Posterior cingulate gyrus (tissue), 11 donors: ENCODE measurements at regions of chr2 and their contacts with region 1.

Region 1: DNA sequence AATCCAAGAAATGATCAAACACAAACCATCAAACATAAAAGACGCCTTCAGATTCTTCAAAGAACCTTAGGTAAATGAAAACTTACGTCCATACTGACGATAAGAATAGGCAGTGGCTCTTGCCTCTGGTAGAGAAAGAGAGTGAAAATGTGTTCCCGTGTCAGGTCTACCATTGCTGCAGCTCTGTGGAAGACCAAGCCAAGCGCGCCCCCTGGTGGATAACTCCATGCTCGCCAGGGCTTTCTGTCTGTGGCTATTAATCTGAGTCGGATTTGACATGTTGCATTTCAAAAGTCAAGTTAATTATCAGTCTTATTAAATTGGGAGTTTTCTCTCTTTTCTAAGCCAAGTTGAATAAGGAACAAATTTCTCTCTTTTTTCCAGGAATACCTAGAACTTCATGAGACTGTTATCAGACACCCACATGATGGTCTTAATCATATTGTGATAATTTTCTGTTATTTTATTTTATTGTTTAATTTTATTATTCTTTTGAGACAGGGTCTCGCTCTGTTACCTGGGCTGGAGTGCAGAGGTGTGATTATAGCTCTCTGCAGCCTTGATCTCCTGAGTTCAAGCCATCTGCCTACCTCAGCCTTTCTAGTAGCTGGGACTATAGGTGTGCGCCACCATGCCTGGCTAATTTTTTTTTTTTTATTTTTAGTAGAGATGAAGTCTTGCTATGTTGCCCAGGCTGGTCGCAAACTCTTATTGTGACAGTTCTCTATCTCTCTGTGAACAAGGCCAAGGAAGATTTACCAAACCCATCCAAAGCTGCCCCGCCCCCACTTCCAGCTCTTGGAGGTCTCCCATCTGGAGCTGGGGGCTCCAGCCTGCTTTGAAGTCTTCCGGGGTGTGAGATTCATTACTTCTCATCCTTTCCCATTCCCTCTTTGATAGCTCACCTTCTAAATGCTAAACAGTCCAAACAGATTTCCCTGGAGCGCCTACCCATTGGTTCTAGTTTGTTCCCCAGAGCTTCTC is 15.8 kb upstream of the ZAP70 start:
- DNase-seq: peak; percentile 83 to 99 (median 94)

Region 2: DNA sequence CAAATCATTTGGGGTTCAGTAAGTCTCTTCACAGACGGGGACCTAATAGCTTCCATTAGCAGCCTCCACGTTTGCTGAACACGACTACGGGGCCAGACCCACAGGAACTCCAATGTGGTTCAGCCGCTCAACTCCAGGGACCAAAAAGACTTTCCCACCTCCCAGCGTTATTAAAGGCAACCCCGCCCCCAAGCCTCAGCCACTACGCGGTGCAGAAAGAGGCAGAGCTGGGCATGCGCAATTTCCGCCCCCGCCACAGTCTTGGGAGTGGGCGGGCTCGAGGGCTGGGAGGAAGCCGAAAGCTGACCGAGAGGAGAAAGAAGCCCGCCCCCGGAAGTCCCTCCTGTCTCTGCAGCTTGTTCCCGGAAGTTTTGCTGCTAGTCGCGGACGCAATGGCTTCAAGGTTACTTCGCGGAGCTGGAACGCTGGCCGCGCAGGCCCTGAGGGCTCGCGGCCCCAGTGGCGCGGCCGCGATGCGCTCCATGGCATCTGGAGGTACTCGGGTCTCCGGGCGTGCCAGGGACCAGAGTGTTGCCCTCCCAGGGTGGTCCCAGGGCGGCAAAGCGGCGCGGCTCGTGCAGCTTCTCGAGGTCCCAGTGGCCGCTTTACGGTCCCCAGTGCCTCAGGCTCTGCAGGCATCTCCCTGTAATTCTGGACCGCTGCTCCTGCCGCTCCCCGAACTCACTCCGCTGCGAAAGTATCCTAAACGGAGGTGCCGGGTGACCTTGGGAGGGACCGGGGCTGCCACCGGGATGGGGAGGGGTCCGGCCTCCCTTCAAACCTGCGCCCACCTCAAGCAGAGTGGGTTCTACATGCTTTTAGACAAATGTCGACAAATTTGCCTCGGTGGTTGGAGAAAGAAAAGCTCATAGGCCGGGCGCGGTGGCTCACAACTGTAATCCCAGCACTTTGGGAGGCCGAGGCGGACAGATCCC is 51.6 kb before region 1 on chr2 and contains the start of gene COX5B:
- intact Hi-C with region 1: loop called (anchors 10 kb)
- DNase-seq: peak; percentile 99 to 100 (median 99)

Region 3: GRCh38 chr2:97663965-97664635 is 33.4 kb before region 1 on chr2 and contains the start of gene ACTR1B:
- intact Hi-C with region 1: loop called (anchors 2 kb)
- DNase-seq: peak; percentile 96 to 100 (median 98)

Region 4: GRCh38 chr2:98385050-98385699 is 687.6 kb after region 1 on chr2:
- intact Hi-C with region 1: loop called (anchors 10 kb)
- DNase-seq: peak; percentile 64 to 97 (median 85)

Region 5: DNA sequence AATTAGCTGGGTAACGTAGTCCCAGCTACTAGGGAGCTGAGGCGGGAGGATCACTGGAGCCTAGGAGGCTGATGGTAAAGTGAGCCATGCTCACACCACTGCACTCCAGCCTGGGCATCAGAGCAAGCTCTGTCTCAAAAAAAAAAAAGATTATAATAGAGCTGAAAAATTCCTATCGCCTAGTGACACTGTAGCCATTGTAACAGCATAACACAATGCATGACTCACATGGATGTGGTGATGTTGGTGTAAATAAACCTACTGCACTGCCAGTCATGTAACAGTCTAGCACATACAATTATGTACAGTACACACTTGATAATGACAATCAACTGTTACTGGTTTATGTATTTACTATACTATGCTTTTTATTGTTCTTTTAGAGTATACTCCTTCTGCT is 993.8 kb after region 1 on chr2:
- intact Hi-C with region 1: no loop called
- DNase-seq: no peak